ENCODE measurements at regions of chr15 and their contacts with region 1.

Region 1: DNA sequence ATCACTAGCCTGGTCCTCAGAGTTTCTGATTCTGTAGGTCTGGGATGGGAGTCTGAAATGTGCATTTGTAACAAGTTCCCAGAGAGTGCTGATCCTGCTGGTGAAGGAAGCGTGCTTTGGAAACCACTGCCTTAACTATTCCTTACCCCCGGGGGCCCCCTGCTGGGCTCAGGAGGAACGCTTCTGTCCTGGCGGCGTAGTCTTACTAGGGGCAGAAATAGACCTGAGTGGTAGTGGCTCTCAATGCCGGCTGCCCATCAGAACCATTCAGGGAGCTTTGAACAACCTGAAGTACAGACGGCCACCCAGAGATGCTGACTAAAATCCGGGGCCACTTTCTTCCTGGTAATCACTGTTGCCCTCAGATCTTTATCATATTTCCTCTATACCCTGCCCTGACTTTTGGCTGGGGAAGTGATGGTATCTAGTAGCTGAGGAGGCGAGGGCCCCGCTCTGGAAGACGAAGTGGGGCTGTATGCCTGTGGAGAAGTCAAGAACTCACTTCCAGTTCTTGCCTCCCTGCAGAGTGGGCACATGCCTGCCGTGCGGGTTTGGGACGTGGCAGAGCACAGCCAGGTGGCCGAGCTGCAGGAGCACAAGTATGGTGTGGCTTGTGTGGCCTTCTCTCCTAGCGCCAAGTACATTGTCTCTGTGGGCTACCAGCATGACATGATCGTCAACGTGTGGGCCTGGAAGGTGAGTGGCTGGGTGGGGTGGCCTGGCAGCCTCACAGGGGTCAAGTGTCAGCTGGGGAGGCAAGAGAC is 16.3 kb upstream of the JMJD7 start:
- DNase-seq: peak; percentile 24
- H3K4me3 ChIP-seq: no peak overlapping the region
- CTCF ChIP-seq: peak; percentile 92

Region 2: GRCh38 chr15:41465822-41466421 is 345.7 kb before region 1 on chr15:
- CTCF ChIA-PET with region 1: interaction called, 39 read pairs
- POLR2A ChIA-PET with region 1: no interaction called
- DNase-seq: peak; percentile 14
- H3K4me3 ChIP-seq: no peak overlapping the region
- CTCF ChIP-seq: peak; percentile 83

Region 3: GRCh38 chr15:41603941-41604911 is 207.4 kb before region 1 on chr15:
- CTCF ChIA-PET with region 1: interaction called, 33 read pairs
- POLR2A ChIA-PET with region 1: no interaction called
- DNase-seq: peak; percentile 47
- H3K4me3 ChIP-seq: peak overlapping the region; percentile 50
- CTCF ChIP-seq: peak; percentile 86

Region 4: GRCh38 chr15:41653760-41654159 is 157.9 kb before region 1 on chr15:
- CTCF ChIA-PET with region 1: no interaction called
- POLR2A ChIA-PET with region 1: no interaction called
- DNase-seq: no peak
- H3K4me3 ChIP-seq: no peak overlapping the region
- CTCF ChIP-seq: no peak

Region 5: DNA sequence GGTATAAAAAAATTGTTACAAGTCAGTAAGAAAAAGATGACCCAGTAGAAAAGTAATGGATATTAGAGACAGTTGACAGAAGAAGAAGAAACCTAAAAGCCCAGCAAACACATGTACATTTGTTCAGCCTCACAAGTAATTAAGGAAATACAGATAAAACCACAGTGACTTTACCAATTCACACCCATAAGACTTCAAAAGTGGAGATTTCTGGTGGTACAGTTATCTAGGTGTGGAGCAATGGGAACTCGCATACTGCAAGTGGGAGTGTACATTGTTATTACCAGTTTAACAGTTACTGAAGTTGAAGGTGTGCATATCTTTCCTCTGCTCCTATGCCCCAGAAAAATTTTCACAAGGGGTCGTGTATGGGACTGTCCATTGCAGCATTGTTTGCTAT is 55.4 kb before region 1 on chr15:
- CTCF ChIA-PET with region 1: interaction called, 21 read pairs
- POLR2A ChIA-PET with region 1: interaction called, 5 read pairs
- DNase-seq: no peak
- H3K4me3 ChIP-seq: no peak overlapping the region
- CTCF ChIP-seq: no peak

Region 6: DNA sequence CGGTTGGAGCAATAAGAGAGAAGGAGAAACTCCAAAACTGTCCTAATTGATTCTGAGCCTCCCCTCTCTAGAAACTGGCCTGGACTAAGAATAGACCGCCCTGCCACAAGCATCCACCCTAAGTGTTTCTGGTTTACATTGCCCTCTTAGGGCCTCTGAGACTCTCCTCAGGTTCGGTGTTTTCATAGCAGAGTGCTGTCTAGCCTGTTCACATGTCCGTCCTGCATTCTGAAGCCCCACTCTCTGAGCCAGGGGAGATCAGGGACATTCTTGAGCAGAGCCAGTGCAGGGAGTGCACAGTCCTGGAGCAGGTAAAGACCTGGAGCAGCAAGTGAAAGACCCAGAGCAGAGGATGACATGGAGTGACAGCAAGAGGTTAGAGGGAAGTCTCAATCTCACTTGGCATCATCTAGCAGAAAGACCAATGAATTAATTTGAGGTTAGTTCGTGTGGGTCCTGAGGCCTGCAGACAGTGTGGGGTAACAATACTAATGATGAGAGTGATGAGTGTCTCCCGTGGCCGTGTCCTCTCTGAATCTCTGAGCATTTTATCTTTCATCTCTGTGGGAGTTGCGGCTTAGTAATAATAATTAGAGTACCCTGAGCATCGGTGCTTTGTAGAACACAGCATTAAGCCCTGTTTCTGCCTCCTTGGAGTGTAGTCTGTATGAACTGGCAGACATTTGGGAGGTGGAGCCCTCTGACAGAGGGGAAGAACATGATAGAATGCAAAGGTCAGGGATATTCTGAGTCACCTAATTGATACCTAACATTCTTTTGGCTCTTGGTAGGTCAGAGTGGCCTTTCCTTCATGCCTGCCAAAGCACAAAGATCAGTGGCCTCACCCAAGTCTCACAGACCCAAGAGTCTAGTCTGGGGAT is 12.8 kb before region 1 on chr15:
- CTCF ChIA-PET with region 1: interaction called, 102 read pairs
- POLR2A ChIA-PET with region 1: no interaction called
- DNase-seq: no peak
- H3K4me3 ChIP-seq: no peak overlapping the region
- CTCF ChIP-seq: no peak

Region 7: DNA sequence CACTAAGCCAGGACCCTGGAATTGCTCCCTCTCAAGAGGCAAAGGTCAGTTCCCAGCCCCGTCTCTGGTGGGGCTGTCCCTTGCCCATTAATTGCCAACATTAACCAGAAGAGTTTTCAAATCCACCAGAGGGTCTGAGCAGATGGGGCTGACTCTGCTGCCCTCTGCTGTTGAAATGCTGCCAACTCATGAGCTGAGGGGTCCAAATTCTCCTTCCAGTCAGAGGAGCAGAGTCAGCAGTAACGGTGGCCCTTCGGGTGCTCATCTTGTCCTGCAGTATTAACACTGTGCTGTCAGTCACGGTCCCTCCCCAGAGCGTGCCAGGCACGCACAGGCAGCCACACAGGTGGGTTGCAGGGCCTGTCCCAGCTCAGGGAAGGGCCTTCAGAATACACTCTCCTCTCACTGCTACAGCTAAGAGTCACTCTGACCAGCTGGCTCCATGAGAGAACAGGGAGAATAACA is 93.0 kb after region 1 on chr15:
- CTCF ChIA-PET with region 1: interaction called, 13 read pairs
- POLR2A ChIA-PET with region 1: no interaction called
- DNase-seq: no peak
- H3K4me3 ChIP-seq: no peak overlapping the region
- CTCF ChIP-seq: peak; percentile 91

Measured in AG04449 (cell line).